ENCODE measurements at regions of chr6 and their contacts with region 1.

Region 1: GRCh38 chr6:41449399-41450245 is 96.6 kb upstream of the FOXP4 start:
- DNase-seq: no peak
- H3K4me3 ChIP-seq: no peak overlapping the region
- H3K27ac ChIP-seq: no peak overlapping the region
- H3K4me1 ChIP-seq: no peaks in the 10 kb centered on the region
- H3K27me3 ChIP-seq: no peaks in the 10 kb centered on the region
- CTCF ChIP-seq: no peak

Region 2: DNA sequence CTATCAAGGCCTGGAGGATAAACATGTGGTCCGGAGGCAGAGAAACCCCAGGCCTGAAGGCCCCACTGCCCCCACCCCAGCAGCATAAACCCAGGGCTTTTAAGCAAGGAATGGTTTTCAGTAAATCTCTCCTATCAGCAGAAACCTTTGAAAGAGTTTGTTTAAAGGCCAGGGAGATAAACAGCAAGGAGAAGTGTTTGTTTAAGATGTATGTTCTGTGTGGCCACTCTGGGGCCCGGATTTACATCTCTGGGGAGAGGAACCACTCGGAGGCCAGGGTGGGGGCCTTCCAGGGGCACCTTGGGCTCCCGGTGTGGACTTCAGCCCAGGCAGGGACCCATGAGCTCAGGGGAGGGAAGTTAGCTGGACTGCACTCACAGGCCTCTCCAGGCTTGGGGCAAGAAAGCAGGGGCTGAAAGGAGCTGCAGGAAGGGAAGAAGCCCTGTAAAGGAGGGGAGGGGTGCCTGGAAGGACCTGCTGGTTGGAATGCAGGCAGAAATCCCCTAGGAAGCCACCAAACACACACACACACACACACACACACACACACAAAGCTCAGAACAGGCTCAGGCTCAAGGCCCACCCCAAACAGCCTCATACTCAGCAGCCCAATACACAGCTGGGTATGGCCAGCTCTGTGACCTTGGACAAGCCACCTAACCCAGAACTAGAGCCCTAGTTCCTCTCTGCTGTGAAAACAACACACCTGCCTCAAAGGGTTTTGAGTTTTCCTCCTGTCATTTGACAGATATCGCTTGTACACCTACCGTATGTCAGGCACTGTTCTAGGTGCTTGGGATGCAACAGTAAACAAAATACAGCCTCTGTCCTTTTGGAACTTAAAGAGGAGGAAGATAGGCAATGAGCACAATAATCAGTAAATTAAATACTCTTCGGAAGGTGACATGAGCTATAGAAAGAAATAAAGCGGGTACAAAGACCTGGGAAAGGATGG is 70.4 kb after region 1 on chr6:
- CTCF ChIA-PET with region 1: no interaction called
- dilution Hi-C with region 1: no loop called
- in situ Hi-C with region 1: no loop called
- intact Hi-C with region 1: loop called (anchors 10 kb)
- DNase-seq: no peak
- H3K4me3 ChIP-seq: no peak overlapping the region
- H3K27ac ChIP-seq: no peak overlapping the region
- H3K4me1 ChIP-seq: no peaks in the 10 kb centered on the region
- H3K27me3 ChIP-seq: no peaks in the 10 kb centered on the region
- CTCF ChIP-seq: no peak

Measured in mammary epithelial cell (primary cell).